ENCODE measurements at regions of chr21 and their contacts with region 1.

Region 1: DNA sequence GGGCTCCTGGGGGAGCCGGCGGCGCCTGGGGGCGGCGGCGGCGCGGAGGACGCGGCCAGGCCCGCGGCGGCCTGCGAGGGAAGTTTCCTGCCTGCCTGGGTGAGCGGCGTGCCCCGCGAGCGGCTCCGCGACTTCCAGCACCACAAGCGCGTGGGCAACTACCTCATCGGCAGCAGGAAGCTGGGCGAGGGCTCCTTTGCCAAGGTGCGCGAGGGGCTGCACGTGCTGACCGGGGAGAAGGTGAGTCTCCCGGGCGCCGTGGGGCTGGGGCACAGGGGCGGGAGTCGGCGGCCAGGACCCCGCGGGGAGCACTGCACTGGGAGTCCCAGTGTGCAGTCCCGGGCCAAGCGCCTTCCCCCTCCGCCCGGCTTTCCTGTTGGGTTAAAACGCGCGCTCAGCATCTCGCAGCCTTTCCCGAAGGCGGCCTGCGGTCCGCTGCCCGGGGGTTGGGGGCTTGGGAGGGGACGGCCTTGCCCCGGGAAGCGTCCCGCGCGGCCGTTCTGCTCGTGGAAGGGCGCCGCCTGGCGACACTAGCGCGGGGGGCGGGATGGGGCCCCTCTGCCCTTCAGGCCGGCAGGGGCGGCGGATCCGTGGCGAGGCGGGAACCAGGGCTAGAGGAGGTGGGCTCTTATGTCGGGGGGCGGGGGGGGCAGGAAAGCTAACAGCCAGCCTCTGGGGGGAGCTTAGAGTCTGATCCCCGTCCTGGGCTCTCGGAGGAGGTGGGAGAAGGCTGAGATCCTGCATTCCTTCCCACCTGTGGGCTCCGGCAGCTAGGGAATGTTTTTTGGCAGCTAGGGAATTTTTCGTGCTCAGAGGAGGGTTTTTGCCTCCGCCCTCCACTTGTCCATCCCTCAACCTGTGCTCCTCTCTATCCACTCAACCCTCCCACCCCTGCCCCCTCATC is 1.1 kb downstream of the HUNK start:
- DNase-seq: no peak
- ATAC-seq: peak; percentile 75
- H3K4me3 ChIP-seq: peak overlapping the region; percentile 59 to 84 (median 73); a peak in 5 of 6 replicates
- H3K27ac ChIP-seq: no peak overlapping the region
- H3K4me1 ChIP-seq: peaks cover 55% of the 10 kb centered on the region
- H3K27me3 ChIP-seq: peaks cover 0 to 15% of the 10 kb centered on the region in 2 experiments; a peak in 2 of 5 replicates
- CTCF ChIP-seq: peak; percentile 80
- EP300 ChIP-seq: no peak
- POLR2A ChIP-seq: no peak
- RAD21 ChIP-seq: peak; percentile 67

Region 2: DNA sequence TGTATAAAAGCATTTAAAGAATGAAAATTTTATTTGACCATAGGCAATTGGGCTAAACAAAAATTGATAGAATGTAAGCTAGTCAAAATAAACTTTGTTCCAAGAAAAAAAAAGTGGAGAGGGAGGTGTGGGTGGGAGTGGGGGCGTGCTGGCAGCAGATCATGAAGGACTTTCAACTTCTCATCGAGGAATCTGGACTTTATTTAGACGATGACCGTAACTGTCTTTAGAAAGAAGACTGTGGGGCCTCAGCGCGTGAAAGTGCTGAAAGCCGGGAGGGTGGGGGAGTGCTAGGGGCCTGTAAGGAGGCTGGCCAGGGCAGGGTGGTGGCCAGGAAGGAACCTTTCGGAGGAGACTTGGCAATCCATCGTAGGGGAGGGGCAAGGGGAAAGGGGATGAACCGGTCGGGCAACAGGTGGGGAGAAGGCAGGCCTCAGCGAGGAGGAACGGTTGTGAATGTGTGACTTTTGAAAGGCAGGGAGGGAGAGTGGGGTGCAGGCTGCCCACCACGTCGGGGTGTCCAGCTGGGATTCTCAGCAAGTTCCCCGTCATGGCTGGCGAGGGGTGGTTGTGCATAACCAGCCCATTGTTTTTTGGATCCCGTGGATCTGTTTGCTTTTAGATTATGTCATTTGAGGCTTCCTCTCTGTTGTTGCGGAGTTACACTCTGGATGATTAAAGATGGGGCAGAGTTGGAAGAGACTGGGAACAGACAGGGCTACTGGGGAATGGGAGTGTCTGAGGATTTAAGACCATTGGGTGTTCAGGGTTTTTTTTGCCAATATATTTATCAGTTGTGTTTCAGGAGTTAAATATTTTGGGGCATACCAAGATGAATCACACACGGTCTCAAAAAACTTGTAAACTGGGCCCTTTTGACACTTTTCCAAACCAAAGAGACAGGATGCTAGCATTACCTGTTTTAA is 34.4 kb after region 1 on chr21:
- CTCF ChIA-PET with region 1: no interaction called
- POLR2A ChIA-PET with region 1: no interaction called
- in situ Hi-C with region 1: loop called (anchors 5 kb)
- intact Hi-C with region 1: no loop called
- DNase-seq: peak; percentile 74
- ATAC-seq: peak; percentile 78
- H3K4me3 ChIP-seq: peak overlapping the region; percentile 49 to 72 (median 54)
- H3K27ac ChIP-seq: peak overlapping the region; percentile 65
- H3K4me1 ChIP-seq: peaks cover 73% of the 10 kb centered on the region
- H3K27me3 ChIP-seq: no peaks in the 10 kb centered on the region
- CTCF ChIP-seq: no peak
- EP300 ChIP-seq: no peak
- POLR2A ChIP-seq: no peak
- RAD21 ChIP-seq: no peak

Region 3: GRCh38 chr21:31927689-31928353 is 53.9 kb after region 1 on chr21:
- CTCF ChIA-PET with region 1: no interaction called
- POLR2A ChIA-PET with region 1: no interaction called
- in situ Hi-C with region 1: no loop called
- intact Hi-C with region 1: loop called (anchors 5 kb)
- DNase-seq: no peak
- ATAC-seq: no peak
- H3K4me3 ChIP-seq: no peak overlapping the region
- H3K27ac ChIP-seq: peak overlapping the region; percentile 25
- H3K4me1 ChIP-seq: peaks cover 53% of the 10 kb centered on the region
- H3K27me3 ChIP-seq: no peaks in the 10 kb centered on the region
- CTCF ChIP-seq: no peak
- EP300 ChIP-seq: no peak
- POLR2A ChIP-seq: no peak
- RAD21 ChIP-seq: no peak